AG04449 (cell line): ENCODE measurements at regions of chr14 and their contacts with region 1.

Region 1: DNA sequence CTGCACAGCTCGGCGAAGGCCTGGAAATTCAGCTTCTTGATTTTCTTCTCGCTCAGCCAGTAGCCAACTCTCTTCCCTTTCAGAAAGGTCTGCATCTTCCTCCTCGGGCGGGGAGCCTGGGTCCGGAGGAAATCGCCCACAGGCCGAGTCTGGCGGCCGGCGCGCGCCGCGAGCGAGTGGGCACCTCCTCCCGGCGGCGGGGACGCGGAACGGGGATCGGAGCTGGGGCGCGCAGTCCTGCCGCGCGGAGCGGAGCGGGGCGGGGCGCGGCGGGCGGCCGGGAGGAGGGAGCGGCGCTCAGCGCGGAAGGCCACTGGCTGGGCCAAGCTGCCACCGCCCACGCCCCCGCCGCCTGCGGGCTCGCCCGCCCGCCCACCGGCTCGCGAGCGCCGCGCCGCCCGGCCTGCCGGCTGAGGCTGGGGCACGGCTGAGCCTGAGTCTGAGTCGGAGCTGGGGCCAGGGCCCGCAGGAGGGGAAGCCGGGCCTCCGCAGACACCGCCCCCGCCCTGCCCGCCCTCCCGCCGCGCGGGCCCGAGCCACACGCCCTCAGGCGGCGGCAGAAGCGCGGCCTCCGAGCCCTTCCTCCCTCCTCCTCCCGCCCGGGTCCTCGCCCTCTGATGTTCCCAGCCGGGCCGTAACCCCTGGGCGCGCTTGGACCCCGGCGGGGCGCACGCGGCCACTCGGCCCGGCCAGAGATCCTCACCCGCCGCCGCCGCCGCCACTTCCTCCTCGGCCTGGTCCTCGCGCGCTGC is 480 bp downstream of the ITPK1 start:
- DNase-seq: no peak
- H3K4me3 ChIP-seq: peak overlapping the region; percentile 70
- CTCF ChIP-seq: peak; percentile 3

Region 2: GRCh38 chr14:92945959-92946846 is 169.0 kb before region 1 on chr14:
- CTCF ChIA-PET with region 1: interaction called, 123 read pairs
- POLR2A ChIA-PET with region 1: no interaction called
- DNase-seq: no peak
- H3K4me3 ChIP-seq: no peak overlapping the region
- CTCF ChIP-seq: no peak

Region 3: DNA sequence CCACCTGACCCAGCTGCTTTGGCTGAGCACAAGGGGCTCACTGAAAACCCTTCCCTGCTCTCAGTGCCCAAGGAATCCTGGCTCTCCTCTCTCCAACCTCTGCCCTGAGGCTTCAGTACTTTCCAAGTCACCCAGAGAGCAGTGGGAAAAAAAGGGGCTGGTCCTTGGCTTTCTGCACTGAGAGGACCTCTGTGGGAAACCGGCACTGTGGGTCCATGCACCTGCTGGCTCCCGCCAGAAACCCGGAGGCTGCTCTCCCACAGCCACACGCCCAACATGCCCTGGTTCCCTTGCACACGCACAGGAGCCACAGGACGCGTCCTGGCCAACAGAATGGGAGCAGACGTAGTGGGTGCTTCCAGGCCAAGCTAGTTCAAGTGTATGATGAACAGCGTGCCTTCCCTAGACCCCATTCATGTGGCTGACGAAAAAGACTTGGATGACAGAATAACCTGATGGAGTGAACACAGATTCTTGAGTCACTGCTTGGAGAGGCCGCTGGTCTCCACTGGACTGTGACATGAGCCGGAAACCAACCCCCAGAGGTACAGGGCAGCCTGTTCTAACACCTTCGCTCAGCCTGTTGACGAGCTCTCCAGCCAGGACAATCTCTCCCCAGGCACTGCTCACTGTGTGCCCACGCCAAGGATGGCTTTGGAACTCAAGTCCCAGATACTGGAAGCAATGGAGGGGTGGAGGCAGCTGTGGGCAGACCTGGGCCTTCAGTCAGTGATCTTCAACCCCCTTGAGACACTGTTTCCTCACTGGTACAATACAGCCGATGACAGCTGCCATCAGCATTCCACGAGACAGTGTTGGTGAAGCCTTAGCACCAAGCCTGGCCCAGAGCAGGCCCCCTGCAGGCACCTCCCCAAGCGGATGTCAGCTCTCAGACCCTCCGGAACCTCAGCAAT is 87.2 kb before region 1 on chr14:
- CTCF ChIA-PET with region 1: interaction called, 10 read pairs
- POLR2A ChIA-PET with region 1: no interaction called
- DNase-seq: no peak
- H3K4me3 ChIP-seq: no peak overlapping the region
- CTCF ChIP-seq: no peak

Region 4: DNA sequence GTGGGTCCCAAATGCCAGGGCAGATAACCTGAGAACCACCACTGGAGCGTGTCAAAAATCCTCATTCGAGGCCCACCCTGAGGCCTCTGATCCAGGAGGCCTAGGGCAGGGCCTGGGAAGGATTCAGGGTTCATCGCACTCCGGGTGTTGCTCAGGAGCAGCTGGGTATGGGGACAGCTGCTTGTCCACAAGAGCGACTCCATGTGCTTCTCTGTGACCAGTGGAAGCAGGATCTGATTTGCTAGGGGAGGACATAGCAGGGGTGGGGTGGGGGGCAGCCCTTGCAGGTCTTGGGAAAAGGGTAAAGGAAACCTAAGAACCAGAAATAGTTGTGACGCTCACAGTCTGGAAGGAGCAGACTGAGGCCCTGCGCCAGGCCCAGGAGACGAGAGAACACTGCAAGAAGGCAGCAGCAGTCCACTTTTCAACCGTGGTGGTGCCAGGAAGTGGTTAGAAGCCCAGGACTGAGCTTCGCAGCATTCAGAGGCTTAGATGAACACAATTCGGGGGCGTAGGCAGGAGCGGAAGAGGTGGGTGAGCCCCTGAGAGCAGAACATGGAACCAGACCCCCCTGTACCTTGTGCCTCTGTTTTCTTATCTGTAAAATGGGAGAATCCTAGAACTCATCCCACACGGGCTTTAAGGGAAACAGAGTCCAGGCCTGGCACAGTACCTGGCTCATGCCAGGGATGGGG is 33.2 kb before region 1 on chr14:
- CTCF ChIA-PET with region 1: interaction called, 63 read pairs
- POLR2A ChIA-PET with region 1: interaction called, 6 read pairs
- DNase-seq: no peak
- H3K4me3 ChIP-seq: no peak overlapping the region
- CTCF ChIP-seq: no peak

Region 5: GRCh38 chr14:93132470-93133065 is 17.3 kb after region 1 on chr14:
- CTCF ChIA-PET with region 1: interaction called, 326 read pairs
- POLR2A ChIA-PET with region 1: no interaction called
- DNase-seq: no peak
- H3K4me3 ChIP-seq: no peak overlapping the region
- CTCF ChIP-seq: peak; percentile 39

Region 6: DNA sequence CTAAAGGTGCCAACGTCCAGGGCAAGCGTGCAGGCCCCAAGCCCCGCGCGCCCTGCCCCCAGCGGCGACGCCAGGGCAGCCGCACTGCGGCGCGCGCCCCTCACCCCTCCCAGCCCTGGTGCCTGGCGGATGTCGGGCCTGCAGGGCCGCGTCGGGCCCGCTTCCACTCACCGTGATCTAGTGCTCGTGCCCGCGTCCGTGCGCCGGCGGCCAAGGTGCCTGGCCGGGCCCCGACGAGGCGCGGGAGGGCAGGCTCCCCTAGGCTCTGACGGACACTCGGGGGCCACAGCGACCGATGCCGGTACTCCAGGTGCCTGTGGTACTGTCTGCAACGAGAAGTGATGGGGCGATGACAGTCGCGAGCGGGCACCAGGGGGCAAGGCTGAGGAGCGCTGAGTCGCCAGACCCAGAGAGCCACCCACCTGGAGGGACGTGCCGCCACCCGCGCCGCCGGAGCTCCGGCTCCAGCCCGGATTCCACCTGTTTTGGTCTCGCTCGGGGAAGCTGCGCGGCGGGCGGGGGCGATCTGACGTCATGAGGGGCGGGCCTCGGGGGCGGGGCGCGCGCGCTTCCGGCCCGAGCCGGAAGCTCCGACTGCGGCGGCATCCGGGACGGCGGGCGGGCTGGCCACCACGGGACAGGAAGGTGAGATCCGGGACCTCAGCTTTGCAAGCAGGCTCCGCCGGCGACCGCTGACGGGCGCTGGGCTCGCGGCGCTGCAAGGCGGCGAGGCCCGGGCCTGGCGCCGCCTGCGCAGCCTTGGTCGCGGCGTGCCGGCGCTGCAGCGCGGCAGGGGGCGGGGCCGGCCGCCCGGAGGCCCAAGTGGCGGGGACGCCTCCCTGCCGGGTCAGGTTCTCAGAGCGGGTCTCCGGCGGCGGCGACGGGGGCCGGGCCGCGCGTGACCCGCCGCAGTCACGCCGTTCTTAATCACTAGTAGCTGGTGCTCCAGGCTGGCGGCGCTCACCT is 69.4 kb after region 1 on chr14 and contains the starts of genes LYSET and MOAP1:
- CTCF ChIA-PET with region 1: interaction called, 68 read pairs
- POLR2A ChIA-PET with region 1: no interaction called
- DNase-seq: no peak
- H3K4me3 ChIP-seq: peak within 1 kb of the TSS; percentile 96
- CTCF ChIP-seq: peak; percentile 6